AG04450 (cell line): ENCODE measurements at regions of chr10 and their contacts with region 1.

Region 1: DNA sequence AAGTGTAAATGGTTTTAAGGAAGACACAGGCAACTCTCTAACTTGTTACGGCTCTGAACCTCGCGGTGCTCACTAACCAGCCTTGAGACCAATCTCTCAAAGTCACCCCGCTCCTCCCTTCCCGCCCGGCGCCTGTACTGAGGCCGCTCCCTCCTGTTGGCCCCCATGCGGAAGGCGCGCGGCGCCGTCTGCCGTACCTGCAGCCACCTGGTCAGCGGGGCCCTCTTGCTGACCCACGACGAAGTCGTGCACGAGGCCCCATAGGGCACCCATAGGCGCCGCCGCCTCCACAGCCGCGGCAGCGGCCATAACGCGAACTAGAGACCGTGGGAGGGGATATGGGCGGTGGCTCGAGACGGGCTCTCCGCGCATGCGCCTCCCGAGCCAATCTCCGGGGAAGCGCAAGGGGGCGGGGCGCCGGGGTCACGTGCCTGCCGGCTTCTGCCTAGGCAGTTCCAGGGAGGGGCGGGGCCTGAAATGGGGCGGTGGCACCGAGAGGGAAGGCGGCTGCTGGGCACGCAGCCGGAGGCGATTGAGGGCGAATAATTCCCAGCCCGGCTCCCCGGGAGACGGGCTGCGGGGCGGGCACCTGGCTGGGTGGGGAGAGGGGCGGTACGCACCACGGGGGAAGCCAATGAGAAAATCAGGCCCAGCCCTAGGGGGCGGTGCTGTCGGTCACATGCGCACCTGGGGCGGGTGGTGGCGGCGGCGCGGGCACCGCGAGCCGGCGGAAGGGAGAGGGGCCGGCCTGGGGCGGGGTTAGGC is at the start of gene MMS19:
- DNase-seq: peak; percentile 96
- H3K4me3 ChIP-seq: peak within 1 kb of the TSS; percentile 78
- H3K27ac ChIP-seq: peak within 1 kb of the TSS; percentile 87
- H3K27me3 ChIP-seq: no peaks in the 10 kb centered on the region
- CTCF ChIP-seq: no peak
- polyA plus RNA-seq, gene MMS19: 71.5 and 80.2 TPM in 2 replicates

Region 2: GRCh38 chr10:97117372-97117771 is 380.9 kb before region 1 on chr10:
- CTCF ChIA-PET with region 1: no interaction called
- POLR2A ChIA-PET with region 1: no interaction called
- DNase-seq: no peak
- H3K4me3 ChIP-seq: no peak overlapping the region
- H3K27ac ChIP-seq: no peak overlapping the region
- H3K27me3 ChIP-seq: peaks cover 40% of the 10 kb centered on the region
- CTCF ChIP-seq: peak; percentile 22

Region 3: DNA sequence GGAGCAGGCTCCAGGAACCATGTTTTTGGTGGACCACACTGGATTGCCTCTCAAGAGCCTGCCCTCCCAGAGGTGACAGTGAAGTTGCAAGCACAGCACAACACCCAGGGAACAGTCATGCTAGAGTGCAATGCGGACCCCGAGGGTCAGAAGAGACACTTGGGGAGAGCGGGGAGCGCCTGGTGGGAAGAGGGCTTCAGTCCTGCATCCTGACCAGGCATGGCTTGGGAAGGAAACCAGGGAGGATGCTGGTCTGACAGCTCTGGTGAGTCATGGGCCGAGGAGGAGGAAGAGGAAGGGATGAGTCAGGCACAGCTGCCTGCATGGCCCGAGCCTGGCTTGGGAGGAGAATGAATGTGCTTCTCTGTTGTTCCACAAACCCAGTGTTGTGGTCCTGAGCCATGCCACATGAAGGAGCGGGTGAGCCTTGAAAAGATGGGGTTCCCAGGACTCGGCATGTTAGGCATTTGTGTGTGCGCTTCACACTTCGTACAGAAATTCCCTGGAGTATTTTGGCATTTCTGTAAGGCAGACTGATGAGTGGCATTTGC is 44.8 kb after region 1 on chr10:
- CTCF ChIA-PET with region 1: interaction called, 5 read pairs
- POLR2A ChIA-PET with region 1: interaction called, 10 read pairs
- DNase-seq: peak; percentile 84
- H3K4me3 ChIP-seq: peak overlapping the region; percentile 3; the same call in 1 of the 2 replicates
- H3K27ac ChIP-seq: peak overlapping the region; percentile 99
- H3K27me3 ChIP-seq: no peaks in the 10 kb centered on the region
- CTCF ChIP-seq: no peak